PC-9 (cell line): ENCODE measurements at regions of chr5 and their contacts with region 1.

Region 1: DNA sequence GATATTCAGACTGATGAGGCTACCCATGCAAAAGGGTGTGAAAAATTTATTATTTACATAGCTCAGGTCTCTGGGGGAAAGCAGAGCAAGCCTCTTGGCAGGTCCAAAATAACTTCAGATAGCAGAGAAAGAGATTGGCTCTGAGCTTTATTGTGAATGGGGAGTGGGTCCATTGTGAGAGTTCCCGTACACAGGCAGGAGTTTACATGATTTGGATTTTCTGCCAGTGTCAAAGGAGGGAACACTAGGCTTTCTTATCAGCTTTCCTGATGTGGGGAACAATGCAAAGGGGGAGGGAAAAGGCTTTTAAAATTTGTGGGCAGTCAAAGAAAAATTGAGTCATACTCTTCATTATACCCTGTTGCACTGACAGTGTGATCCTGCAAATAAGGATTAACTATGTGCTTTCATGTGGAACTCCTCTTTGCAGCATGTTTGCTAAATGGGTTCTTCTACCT is 615.0 kb upstream of the RIOK2 start:
- DNase-seq: no peak
- H3K4me3 ChIP-seq: no peak overlapping the region
- H3K27ac ChIP-seq: no peak overlapping the region
- H3K4me1 ChIP-seq: no peaks in the 10 kb centered on the region
- H3K27me3 ChIP-seq: no peaks in the 10 kb centered on the region
- CTCF ChIP-seq: no peak

Region 2: GRCh38 chr5:97820146-97820545 is 22.1 kb after region 1 on chr5:
- CTCF ChIA-PET with region 1: no interaction called
- POLR2A ChIA-PET with region 1: no interaction called
- intact Hi-C with region 1: loop called (anchors 1 kb)
- DNase-seq: no peak
- H3K4me3 ChIP-seq: no peak overlapping the region
- H3K27ac ChIP-seq: no peak overlapping the region
- H3K4me1 ChIP-seq: no peaks in the 10 kb centered on the region
- H3K27me3 ChIP-seq: no peaks in the 10 kb centered on the region
- CTCF ChIP-seq: no peak

Region 3: DNA sequence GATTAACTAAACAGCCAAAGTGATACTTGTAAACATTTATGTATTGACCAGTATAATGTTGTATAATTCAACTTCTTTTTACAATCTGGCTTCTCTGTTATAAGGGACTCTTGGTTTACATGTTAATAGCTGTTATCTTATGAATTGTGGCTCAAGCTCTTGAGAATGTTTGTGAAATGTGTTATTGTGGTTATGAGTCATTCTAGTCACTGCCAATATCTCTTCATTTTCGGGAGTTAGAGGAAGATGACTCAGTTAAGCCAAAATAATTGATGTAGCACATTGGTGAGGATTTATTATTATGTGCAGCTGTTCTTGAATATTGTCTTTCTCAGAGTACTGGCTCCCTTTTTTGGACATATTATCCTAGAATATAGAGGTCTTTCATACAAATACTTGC is 40.2 kb after region 1 on chr5:
- CTCF ChIA-PET with region 1: no interaction called
- POLR2A ChIA-PET with region 1: no interaction called
- intact Hi-C with region 1: no loop called
- DNase-seq: peak in 1 of 2 experiments; percentile 70
- H3K4me3 ChIP-seq: no peak overlapping the region
- H3K27ac ChIP-seq: no peak overlapping the region
- H3K4me1 ChIP-seq: peaks cover 10% of the 10 kb centered on the region; the same call in 1 of the 2 replicates
- H3K27me3 ChIP-seq: peaks cover 3% of the 10 kb centered on the region; the same call in 1 of the 2 replicates
- CTCF ChIP-seq: no peak